Activated B cell treated with CpG ODN at 0.5 μM for 24 hours (primary cell): ENCODE measurements at regions of chr19 and their contacts with region 1.

Region 1: DNA sequence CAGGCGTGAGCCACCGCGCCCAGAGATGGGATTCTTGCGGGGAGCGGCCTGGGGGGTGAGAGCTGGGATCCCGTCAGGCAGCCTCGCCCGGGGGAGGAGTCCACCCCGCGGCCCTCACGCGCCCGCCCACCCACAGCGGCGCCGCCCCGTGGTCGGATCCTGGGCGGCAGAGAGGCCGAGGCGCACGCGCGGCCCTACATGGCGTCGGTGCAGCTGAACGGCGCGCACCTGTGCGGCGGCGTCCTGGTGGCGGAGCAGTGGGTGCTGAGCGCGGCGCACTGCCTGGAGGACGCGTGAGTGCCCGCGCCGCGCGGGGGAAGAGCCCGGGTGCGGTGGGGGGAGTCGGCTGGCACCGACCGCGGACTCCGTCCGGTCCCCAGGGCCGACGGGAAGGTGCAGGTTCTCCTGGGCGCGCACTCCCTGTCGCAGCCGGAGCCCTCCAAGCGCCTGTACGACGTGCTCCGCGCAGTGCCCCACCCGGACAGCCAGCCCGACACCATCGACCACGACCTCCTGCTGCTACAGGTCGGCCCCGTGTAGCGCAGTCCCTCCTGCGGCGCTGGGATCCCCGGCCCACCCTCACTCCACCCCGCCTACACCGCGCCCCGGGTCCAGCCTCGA is 1.1 kb downstream of the CFD start:
- DNase-seq: peak; percentile 63
- ATAC-seq: peak; percentile 51
- H3K4me3 Mint-ChIP-seq: peak overlapping the region; percentile 28
- H3K27ac Mint-ChIP-seq: no peak overlapping the region
- H3K4me1 Mint-ChIP-seq: peaks cover 19% of the 10 kb centered on the region
- H3K27me3 Mint-ChIP-seq: peaks cover 8% of the 10 kb centered on the region
- CTCF ChIP-seq: no peak

Region 2: GRCh38 chr19:892243-893050 is 31.9 kb after region 1 on chr19:
- CTCF ChIA-PET with region 1: interaction called, 5 read pairs
- POLR2A ChIA-PET with region 1: interaction called, 8 read pairs
- intact Hi-C with region 1: loop called (anchors 1 kb)
- DNase-seq: no peak
- ATAC-seq: peak; percentile 57
- H3K4me3 Mint-ChIP-seq: peak overlapping the region; percentile 91
- H3K27ac Mint-ChIP-seq: peak overlapping the region; percentile 99
- H3K4me1 Mint-ChIP-seq: peaks cover 21% of the 10 kb centered on the region
- H3K27me3 Mint-ChIP-seq: no peaks in the 10 kb centered on the region
- CTCF ChIP-seq: no peak

Region 3: GRCh38 chr19:913080-913748 is 52.6 kb after region 1 on chr19 and contains the start of gene R3HDM4:
- CTCF ChIA-PET with region 1: interaction called, 10 read pairs
- POLR2A ChIA-PET with region 1: interaction called, 52 read pairs
- intact Hi-C with region 1: loop called (anchors 1 kb)
- DNase-seq: peak; percentile 85
- ATAC-seq: peak; percentile 50
- H3K4me3 Mint-ChIP-seq: peak within 1 kb of the TSS; percentile 89
- H3K27ac Mint-ChIP-seq: peak within 1 kb of the TSS; percentile 86
- H3K4me1 Mint-ChIP-seq: peaks cover 36% of the 10 kb centered on the region
- H3K27me3 Mint-ChIP-seq: no peaks in the 10 kb centered on the region
- CTCF ChIP-seq: no peak
- total RNA-seq, gene R3HDM4: 174 and 189 TPM in 2 replicates

Region 4: GRCh38 chr19:925526-926322 is 65.1 kb after region 1 on chr19 and contains the start of gene ARID3A:
- CTCF ChIA-PET with region 1: interaction called, 25 read pairs
- POLR2A ChIA-PET with region 1: interaction called, 20 read pairs
- intact Hi-C with region 1: loop called (anchors 1 kb)
- DNase-seq: peak; percentile 84
- ATAC-seq: peak; percentile 66
- H3K4me3 Mint-ChIP-seq: peak within 1 kb of the TSS; percentile 86
- H3K27ac Mint-ChIP-seq: peak within 1 kb of the TSS; percentile 82
- H3K4me1 Mint-ChIP-seq: peaks cover 22% of the 10 kb centered on the region
- H3K27me3 Mint-ChIP-seq: no peaks in the 10 kb centered on the region
- CTCF ChIP-seq: no peak
- total RNA-seq, gene ARID3A: 67.7 and 74.9 TPM in 2 replicates

Region 5: DNA sequence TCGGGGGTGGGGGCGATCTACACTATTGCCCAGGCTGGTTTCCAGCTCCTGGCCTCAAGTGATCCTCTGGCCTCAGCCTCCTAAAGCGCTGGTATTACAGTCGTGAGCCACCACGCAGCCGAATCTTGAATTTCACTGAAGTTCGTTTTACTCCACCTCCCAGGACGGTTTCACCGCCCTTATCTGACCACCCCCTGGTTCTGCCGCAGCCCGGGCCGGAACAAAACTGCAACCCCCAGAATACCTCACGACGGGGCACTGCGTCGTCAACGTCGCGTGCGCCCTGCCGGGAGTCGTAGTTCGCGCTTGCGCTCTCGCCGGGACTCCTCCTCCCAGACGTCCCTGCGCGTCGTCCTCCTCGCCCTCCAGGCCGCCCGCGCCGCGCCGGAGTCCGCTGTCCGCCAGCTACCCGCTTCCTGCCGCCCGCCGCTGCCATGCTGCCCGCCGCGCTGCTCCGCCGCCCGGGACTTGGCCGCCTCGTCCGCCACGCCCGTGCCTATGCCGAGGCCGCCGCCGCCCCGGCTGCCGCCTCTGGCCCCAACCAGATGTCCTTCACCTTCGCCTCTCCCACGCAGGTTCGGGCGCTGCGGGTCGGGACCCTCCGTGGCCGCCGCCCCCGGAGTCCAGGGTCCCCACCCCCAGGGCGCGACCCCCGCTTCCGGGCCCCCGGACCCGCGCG is 381.0 kb after region 1 on chr19 and contains the start of gene ATP5F1D:
- CTCF ChIA-PET with region 1: no interaction called
- POLR2A ChIA-PET with region 1: interaction called, 3 read pairs
- intact Hi-C with region 1: loop called (anchors 1 kb)
- DNase-seq: peak; percentile 85
- ATAC-seq: peak; percentile 67
- H3K4me3 Mint-ChIP-seq: peak within 1 kb of the TSS; percentile 86
- H3K27ac Mint-ChIP-seq: peak within 1 kb of the TSS; percentile 74
- H3K4me1 Mint-ChIP-seq: peaks cover 53% of the 10 kb centered on the region
- H3K27me3 Mint-ChIP-seq: peaks cover 7% of the 10 kb centered on the region
- CTCF ChIP-seq: no peak
- total RNA-seq, gene ATP5F1D: 172 and 185 TPM in 2 replicates